Naive thymus-derived CD4-positive, alpha-beta T cell (primary cell): ENCODE measurements at regions of chr6 and their contacts with region 1.

Region 1: DNA sequence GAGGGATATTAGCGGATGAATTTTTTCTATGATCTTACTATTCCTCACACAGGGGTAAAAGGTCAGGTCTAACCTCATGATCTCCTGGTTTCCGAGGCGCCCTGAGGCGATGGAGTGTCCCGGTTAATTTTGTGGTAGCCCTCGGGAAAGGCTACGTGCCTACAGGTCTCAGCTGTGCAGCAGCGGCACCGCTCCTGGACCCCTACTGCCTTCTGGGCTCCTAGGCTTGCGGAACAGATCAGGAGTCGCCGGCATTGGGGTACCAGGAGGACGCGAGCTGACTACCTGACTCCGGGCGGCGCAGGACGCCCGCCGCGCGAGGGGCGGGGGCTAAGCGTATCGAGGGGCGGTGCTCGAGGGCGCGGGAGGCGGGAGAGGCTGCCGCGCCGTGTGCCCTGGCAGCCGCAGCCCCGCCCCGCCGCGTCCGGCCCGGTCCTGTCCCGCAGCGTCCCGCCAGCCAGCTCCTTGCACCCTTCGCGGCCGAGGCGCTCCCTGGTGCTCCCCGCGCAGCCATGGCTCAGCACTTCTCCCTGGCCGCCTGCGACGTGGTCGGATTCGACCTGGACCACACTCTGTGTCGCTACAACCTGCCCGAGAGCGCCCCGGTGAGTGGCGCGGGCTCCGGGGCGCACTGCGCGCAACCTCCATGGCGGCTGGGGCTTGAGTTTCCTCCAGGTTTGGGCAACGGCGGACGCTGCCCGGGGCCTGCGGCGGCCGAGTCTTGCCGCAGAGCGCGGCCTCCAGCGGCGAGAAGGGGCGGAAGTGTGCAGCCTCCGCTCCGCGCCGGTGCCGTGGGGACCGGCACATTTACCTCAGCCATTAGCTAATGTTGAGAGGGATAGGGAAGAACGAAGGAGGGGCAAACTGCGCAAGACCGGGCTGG is at the start of gene NT5DC1:
- DNase-seq: peak; percentile 76 to 90 (median 82)
- ATAC-seq: peak; percentile 94
- H3K4me3 ChIP-seq: peak within 1 kb of the TSS; percentile 77
- H3K4me3 Mint-ChIP-seq: peak within 1 kb of the TSS; percentile 89 to 99 (median 96)
- H3K27ac ChIP-seq: peak within 1 kb of the TSS; percentile 79
- H3K27ac Mint-ChIP-seq: peak within 1 kb of the TSS; percentile 85 to 96 (median 92)
- H3K4me1 ChIP-seq: peaks cover 25 to 32% of the 10 kb centered on the region in 2 donors
- H3K4me1 Mint-ChIP-seq: peaks cover 32 to 64% (median 57%) of the 10 kb centered on the region in 7 donors
- H3K27me3 ChIP-seq: no peaks in the 10 kb centered on the region
- H3K27me3 Mint-ChIP-seq: no peaks in the 10 kb centered on the region
- total RNA-seq, gene NT5DC1: 30.5 to 52.6 (median 39.7) TPM

Region 2: GRCh38 chr6:115896538-115897129 is 204.0 kb before region 1 on chr6:
- CTCF ChIA-PET with region 1: no interaction called
- POLR2A ChIA-PET with region 1: no interaction called
- intact Hi-C with region 1: loop called in 1 of 2 experiments (anchors 5 kb)
- DNase-seq: no peak
- ATAC-seq: no peak
- H3K4me3 ChIP-seq: no peak overlapping the region
- H3K4me3 Mint-ChIP-seq: no peak overlapping the region
- H3K27ac ChIP-seq: no peak overlapping the region
- H3K27ac Mint-ChIP-seq: no peak overlapping the region
- H3K4me1 ChIP-seq: no peaks in the 10 kb centered on the region
- H3K4me1 Mint-ChIP-seq: peaks cover 0 to 1% (median 0%) of the 10 kb centered on the region in 7 donors
- H3K27me3 ChIP-seq: no peaks in the 10 kb centered on the region
- H3K27me3 Mint-ChIP-seq: peaks cover 0 to 9% (median 0%) of the 10 kb centered on the region in 5 donors

Region 3: GRCh38 chr6:116111552-116112528 is 11.2 kb after region 1 on chr6:
- CTCF ChIA-PET with region 1: interaction called, 4 read pairs
- POLR2A ChIA-PET with region 1: interaction called, 4 read pairs
- intact Hi-C with region 1: loop called in 1 of 2 experiments (anchors 1 kb)
- DNase-seq: no peak
- ATAC-seq: peak; percentile 40
- H3K4me3 ChIP-seq: no peak overlapping the region
- H3K4me3 Mint-ChIP-seq: no peak overlapping the region
- H3K27ac ChIP-seq: no peak overlapping the region
- H3K27ac Mint-ChIP-seq: no peak overlapping the region
- H3K4me1 ChIP-seq: no peaks in the 10 kb centered on the region
- H3K4me1 Mint-ChIP-seq: peaks cover 0 to 24% (median 5%) of the 10 kb centered on the region in 7 donors
- H3K27me3 ChIP-seq: no peaks in the 10 kb centered on the region
- H3K27me3 Mint-ChIP-seq: no peaks in the 10 kb centered on the region

Region 4: GRCh38 chr6:116253505-116254296 is 153.0 kb after region 1 on chr6 and contains the start of gene TSPYL4:
- CTCF ChIA-PET with region 1: no interaction called
- POLR2A ChIA-PET with region 1: interaction called, 7 read pairs
- intact Hi-C with region 1: loop called (anchors 1 kb)
- DNase-seq: peak; percentile 76 to 96 (median 91)
- ATAC-seq: peak; percentile 97
- H3K4me3 ChIP-seq: peak within 1 kb of the TSS; percentile 80
- H3K4me3 Mint-ChIP-seq: no peak within 1 kb of the TSS
- H3K27ac ChIP-seq: peak within 1 kb of the TSS; percentile 97
- H3K27ac Mint-ChIP-seq: no peak within 1 kb of the TSS
- H3K4me1 ChIP-seq: peaks cover 27 to 36% of the 10 kb centered on the region in 2 donors
- H3K4me1 Mint-ChIP-seq: peaks cover 3 to 43% (median 27%) of the 10 kb centered on the region in 7 donors
- H3K27me3 ChIP-seq: no peaks in the 10 kb centered on the region
- H3K27me3 Mint-ChIP-seq: no peaks in the 10 kb centered on the region
- total RNA-seq, gene TSPYL4: 18.2 to 58.2 (median 21.5) TPM

Region 5: GRCh38 chr6:116461932-116462885 is 361.5 kb after region 1 on chr6:
- CTCF ChIA-PET with region 1: no interaction called
- POLR2A ChIA-PET with region 1: no interaction called
- intact Hi-C with region 1: loop called in 1 of 2 experiments (anchors 5 kb)
- DNase-seq: peak; percentile 25 to 71 (median 62)
- ATAC-seq: peak; percentile 89
- H3K4me3 ChIP-seq: peak overlapping the region; percentile 58
- H3K4me3 Mint-ChIP-seq: peak overlapping the region; percentile 76 to 87 (median 80)
- H3K27ac ChIP-seq: no peak overlapping the region
- H3K27ac Mint-ChIP-seq: peak overlapping the region in 7 of 9 donors; percentile 33 to 92 (median 76)
- H3K4me1 ChIP-seq: peaks cover 7 to 16% of the 10 kb centered on the region in 2 donors
- H3K4me1 Mint-ChIP-seq: peaks cover 17 to 88% (median 26%) of the 10 kb centered on the region in 7 donors
- H3K27me3 ChIP-seq: no peaks in the 10 kb centered on the region
- H3K27me3 Mint-ChIP-seq: peaks cover 0 to 39% (median 4%) of the 10 kb centered on the region in 5 donors

Region 6: GRCh38 chr6:116667623-116668022 is 567.0 kb after region 1 on chr6:
- CTCF ChIA-PET with region 1: no interaction called
- POLR2A ChIA-PET with region 1: no interaction called
- intact Hi-C with region 1: loop called (anchors 2 to 5 kb)
- DNase-seq: no peak
- ATAC-seq: no peak
- H3K4me3 ChIP-seq: peak overlapping the region; percentile 92
- H3K4me3 Mint-ChIP-seq: peak overlapping the region; percentile 90 to 100 (median 98)
- H3K27ac ChIP-seq: peak overlapping the region; percentile 91
- H3K27ac Mint-ChIP-seq: peak overlapping the region; percentile 44 to 100 (median 98)
- H3K4me1 ChIP-seq: peaks cover 17 to 24% of the 10 kb centered on the region in 2 donors
- H3K4me1 Mint-ChIP-seq: peaks cover 29 to 55% (median 45%) of the 10 kb centered on the region in 7 donors
- H3K27me3 ChIP-seq: no peaks in the 10 kb centered on the region
- H3K27me3 Mint-ChIP-seq: peaks cover 0 to 15% (median 0%) of the 10 kb centered on the region in 5 donors